H1 (cell line): ENCODE measurements at regions of chr19 and their contacts with region 1.

Region 1: DNA sequence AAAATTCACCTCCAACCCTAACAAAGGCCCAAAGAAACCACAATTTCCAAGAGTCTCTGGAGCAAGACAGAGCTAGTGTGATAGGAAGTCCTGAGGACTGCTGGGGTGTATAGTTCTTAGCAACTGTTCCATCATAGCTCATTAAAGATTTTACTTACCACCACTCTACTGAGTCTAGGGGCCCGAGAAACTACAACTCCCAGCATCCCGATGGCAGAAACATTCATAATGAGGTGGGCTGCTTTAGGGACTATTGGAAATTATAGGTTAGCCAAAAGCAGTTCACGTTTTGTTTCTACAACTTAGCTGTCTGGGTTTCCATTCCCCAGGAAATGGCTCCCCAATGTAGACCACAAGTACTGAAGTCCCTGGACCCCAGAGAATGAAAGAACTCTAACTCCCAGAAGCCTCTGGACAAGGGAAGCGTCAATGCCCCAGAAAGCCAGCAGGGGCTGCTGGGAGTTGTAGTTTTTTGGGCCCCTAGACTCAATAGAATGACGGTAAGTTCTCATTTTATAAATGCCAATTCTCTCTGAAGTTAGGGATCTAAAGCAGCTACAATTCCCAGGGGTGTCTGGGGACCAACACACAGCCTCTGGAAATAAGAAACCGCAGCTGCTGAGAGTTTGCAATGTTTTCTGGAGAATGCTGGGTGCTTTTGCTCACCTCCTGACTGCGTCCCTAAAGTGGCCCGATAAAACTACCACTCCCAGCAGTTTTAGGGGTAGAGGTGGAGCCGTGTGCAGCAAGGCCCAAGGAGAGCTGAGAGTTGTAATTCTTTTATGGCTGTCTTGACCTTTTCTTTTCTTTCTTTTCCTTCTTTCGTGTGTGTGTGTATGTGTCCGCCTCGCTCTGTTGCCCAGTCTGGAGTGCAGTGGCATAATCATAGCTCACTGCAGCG is 11.1 kb downstream of the FTL start:
- DNase-seq: peak in 1 of 2 experiments; percentile 72
- H3K4me3 ChIP-seq: no peak overlapping the region
- H3K27ac ChIP-seq: no peak overlapping the region
- H3K4me1 ChIP-seq: no peaks in the 10 kb centered on the region
- H3K27me3 ChIP-seq: no peaks in the 10 kb centered on the region
- CTCF ChIP-seq: no peak
- EP300 ChIP-seq: no peak
- POLR2A ChIP-seq: no peak
- RAD21 ChIP-seq: no peak

Region 2: GRCh38 chr19:48993175-48994034 is 17.2 kb after region 1 on chr19 and contains the starts of genes GYS1 and RUVBL2:
- CTCF ChIA-PET with region 1: interaction called, 19 read pairs
- POLR2A ChIA-PET with region 1: interaction called, 13 read pairs
- DNase-seq: peak; percentile 97 to 99
- H3K4me3 ChIP-seq: peak within 1 kb of the TSS; percentile 74 to 97 (median 92)
- H3K27ac ChIP-seq: peak within 1 kb of the TSS; percentile 63
- H3K4me1 ChIP-seq: peaks cover 0 to 3% (median 0%) of the 10 kb centered on the region in 4 experiments; a peak in 2 of 7 replicates
- H3K27me3 ChIP-seq: no peaks in the 10 kb centered on the region
- CTCF ChIP-seq: peak; percentile 78 to 92 (median 88)
- EP300 ChIP-seq: no peak
- POLR2A ChIP-seq: peak in 1 of 2 experiments; percentile 77; a peak in 2 of 3 replicates
- RAD21 ChIP-seq: peak in 1 of 2 experiments; percentile 8; a peak in 2 of 4 replicates
- total RNA-seq, gene GYS1: 37.8 and 38.7 TPM in 2 replicates
- total RNA-seq, gene RUVBL2: 152 and 160 TPM in 2 replicates

Region 3: GRCh38 chr19:49006926-49007325 is 30.7 kb after region 1 on chr19:
- CTCF ChIA-PET with region 1: no interaction called
- POLR2A ChIA-PET with region 1: no interaction called
- DNase-seq: no peak
- H3K4me3 ChIP-seq: no peak overlapping the region
- H3K27ac ChIP-seq: no peak overlapping the region
- H3K4me1 ChIP-seq: no peaks in the 10 kb centered on the region
- H3K27me3 ChIP-seq: no peaks in the 10 kb centered on the region
- CTCF ChIP-seq: no peak
- EP300 ChIP-seq: no peak
- POLR2A ChIP-seq: no peak
- RAD21 ChIP-seq: no peak